Calu3 (cell line): ENCODE measurements at regions of chr9 and their contacts with region 1.

Region 1: DNA sequence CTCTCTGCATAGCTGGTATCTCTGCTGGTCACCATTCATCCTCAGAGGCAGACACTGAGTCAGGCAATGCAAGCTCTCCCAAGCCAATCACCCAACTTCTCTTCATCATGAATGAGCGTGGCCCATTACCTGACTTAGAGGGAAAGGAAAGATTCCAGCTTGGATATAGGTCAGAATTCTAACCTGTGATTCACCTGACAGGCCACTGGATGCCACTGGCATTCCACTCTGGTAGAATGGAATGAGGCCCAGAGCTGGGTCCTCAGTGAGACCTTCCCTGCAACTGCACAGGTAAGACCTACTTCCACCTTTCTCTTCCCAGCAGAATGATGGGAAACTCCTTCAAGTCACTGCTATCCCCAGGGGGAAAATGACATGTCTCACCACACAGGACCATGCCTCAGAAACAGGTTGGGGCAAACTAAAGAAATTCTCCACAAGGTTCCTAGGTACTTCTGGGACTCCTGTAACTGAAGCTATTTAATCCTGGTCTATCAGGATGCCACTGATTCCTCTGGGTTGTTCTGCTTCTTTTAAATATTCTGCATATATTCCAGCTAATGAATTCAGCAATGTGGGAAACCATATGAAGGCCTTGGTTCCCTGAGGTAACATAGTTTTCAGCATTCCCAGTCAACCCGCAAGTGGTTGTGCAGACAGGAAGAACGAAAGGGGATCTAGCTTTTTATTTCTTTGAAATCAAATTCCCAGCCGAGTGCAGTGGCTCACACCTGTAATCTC is 62.0 kb downstream of the SUSD1 start:
- DNase-seq: peak; percentile 43
- H3K4me3 Mint-ChIP-seq: peak overlapping the region; percentile 9
- H3K27ac Mint-ChIP-seq: peak overlapping the region; percentile 86
- H3K4me1 Mint-ChIP-seq: peaks cover 49% of the 10 kb centered on the region
- H3K27me3 Mint-ChIP-seq: no peaks in the 10 kb centered on the region
- CTCF ChIP-seq: no peak

Region 2: DNA sequence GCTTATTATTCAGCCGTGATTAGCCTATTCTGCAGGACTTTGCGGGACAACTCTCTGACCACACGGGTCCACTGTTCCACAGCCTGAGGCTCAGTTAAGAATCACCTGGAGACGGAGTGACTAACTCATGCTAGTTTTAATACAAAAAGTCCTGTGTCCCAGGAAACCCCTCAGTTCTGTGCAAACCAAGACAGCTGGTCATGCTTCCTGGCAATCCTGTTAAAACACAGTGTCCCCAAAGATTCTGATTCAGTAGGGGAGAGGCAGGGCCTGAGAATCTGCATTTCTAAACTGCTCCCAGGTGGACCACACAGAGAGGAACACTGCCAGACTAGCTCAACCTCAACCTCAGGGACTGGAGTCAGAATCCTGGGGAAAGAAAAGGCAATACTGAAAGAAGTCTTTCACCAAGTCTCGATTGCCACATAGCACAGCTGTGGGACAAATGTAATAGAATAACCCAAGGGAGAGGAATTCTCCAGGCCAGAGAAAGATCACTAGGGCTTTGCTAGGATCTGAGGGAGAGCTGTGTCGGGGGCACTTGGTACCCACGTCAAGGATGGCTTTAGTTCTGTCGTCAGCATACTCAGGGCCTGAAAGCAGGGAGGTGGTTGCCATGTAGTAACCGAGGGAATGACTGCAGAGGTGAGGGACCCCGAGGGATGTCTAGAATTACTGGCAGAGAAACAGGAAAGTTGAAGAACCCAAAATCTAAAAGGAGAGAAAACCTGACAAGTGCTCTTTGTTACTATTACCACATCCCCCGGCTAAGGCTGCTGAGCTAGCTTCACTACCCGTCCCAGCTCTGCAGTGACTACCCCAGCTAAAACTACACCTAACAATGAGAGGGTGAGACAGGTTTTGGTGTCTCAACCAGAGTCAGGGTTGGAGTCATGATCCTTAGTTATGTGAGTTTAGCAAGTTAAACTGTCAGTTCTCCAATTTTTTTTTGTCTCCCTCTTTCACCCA is 53.3 kb after region 1 on chr9:
- CTCF ChIA-PET with region 1: interaction called, 12 read pairs
- intact Hi-C with region 1: loop called (anchors 2 kb)
- DNase-seq: peak; percentile 51
- H3K4me3 Mint-ChIP-seq: peak overlapping the region; percentile 18
- H3K27ac Mint-ChIP-seq: peak overlapping the region; percentile 18
- H3K4me1 Mint-ChIP-seq: peaks cover 56% of the 10 kb centered on the region
- H3K27me3 Mint-ChIP-seq: no peaks in the 10 kb centered on the region
- CTCF ChIP-seq: no peak

Region 3: GRCh38 chr9:112249277-112249676 is 136.2 kb after region 1 on chr9:
- CTCF ChIA-PET with region 1: no interaction called
- intact Hi-C with region 1: loop called (anchors 10 kb)
- DNase-seq: no peak
- H3K4me3 Mint-ChIP-seq: peak overlapping the region; percentile 3
- H3K27ac Mint-ChIP-seq: peak overlapping the region; percentile 50
- H3K4me1 Mint-ChIP-seq: peaks cover 20% of the 10 kb centered on the region
- H3K27me3 Mint-ChIP-seq: no peaks in the 10 kb centered on the region
- CTCF ChIP-seq: no peak

Region 4: DNA sequence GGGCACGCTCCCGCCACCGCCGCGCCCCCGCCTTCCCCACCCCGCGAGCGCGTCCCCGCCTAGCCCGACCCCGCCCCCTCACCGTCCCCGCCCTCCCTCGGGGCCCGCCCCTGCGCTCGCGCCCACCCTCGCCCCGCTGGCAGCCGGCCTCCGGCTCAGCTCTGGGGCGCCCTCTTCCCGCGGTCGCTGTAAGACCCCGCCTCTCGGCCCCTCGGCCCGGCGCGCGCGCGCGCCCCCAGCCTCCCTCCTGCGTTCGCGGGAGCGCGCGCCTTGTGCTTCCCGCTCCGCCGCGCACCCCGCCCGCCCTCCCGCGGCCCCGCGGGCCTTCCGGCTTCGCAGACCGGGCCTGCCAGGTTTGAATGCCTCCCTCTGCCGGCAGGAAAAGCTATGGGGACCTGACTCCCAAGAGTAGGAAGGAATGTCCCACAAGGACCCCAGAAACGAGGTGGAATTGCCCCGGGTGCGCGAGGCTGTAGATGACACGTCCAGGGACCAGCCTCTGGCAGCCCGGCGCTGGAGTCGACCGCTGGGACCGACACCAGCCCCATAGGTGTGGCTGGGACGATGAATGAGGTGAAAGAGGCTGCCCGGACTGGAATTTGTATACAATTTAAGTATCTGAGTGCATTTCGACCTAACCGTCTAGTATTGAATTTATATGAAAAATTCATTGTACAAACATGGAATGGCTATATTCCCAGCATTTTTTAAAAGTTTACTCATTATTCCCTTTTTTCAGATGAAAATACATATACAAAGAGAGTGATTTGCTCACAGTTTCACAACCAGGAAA is 220.7 kb after region 1 on chr9:
- CTCF ChIA-PET with region 1: interaction called, 4 read pairs
- intact Hi-C with region 1: loop called (anchors 5 kb)
- DNase-seq: peak; percentile 90
- H3K4me3 Mint-ChIP-seq: peak overlapping the region; percentile 80
- H3K27ac Mint-ChIP-seq: peak overlapping the region; percentile 88
- H3K4me1 Mint-ChIP-seq: peaks cover 22% of the 10 kb centered on the region
- H3K27me3 Mint-ChIP-seq: no peaks in the 10 kb centered on the region
- CTCF ChIP-seq: peak; percentile 20

Region 5: DNA sequence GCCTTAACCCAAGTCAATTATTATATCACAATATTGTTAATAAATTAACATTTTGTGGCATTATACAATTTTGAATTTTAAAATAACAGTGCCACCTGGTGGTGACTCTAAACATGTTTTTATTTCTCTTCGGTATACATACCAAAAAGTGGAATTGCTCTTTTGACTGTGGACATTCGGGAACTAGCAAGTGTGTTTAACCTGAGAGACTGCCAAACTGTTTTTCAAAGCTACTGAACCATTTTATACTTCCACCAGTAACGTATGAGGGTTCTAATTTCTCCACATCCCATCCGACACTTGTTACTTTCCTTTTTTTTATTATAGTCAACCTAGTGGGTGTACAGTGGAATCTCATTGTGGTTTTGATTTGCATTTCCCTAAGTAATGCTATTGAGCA is 248.5 kb after region 1 on chr9:
- CTCF ChIA-PET with region 1: interaction called, 6 read pairs
- intact Hi-C with region 1: loop called (anchors 1 kb)
- DNase-seq: peak; percentile 12
- H3K4me3 Mint-ChIP-seq: no peak overlapping the region
- H3K27ac Mint-ChIP-seq: no peak overlapping the region
- H3K4me1 Mint-ChIP-seq: no peaks in the 10 kb centered on the region
- H3K27me3 Mint-ChIP-seq: no peaks in the 10 kb centered on the region
- CTCF ChIP-seq: no peak